Activated CD4-positive, alpha-beta T cell treated with anti-CD3 and anti-CD28 coated beads for 36 hours (primary cell): ENCODE measurements at regions of chr2 and their contacts with region 1.

Region 1: DNA sequence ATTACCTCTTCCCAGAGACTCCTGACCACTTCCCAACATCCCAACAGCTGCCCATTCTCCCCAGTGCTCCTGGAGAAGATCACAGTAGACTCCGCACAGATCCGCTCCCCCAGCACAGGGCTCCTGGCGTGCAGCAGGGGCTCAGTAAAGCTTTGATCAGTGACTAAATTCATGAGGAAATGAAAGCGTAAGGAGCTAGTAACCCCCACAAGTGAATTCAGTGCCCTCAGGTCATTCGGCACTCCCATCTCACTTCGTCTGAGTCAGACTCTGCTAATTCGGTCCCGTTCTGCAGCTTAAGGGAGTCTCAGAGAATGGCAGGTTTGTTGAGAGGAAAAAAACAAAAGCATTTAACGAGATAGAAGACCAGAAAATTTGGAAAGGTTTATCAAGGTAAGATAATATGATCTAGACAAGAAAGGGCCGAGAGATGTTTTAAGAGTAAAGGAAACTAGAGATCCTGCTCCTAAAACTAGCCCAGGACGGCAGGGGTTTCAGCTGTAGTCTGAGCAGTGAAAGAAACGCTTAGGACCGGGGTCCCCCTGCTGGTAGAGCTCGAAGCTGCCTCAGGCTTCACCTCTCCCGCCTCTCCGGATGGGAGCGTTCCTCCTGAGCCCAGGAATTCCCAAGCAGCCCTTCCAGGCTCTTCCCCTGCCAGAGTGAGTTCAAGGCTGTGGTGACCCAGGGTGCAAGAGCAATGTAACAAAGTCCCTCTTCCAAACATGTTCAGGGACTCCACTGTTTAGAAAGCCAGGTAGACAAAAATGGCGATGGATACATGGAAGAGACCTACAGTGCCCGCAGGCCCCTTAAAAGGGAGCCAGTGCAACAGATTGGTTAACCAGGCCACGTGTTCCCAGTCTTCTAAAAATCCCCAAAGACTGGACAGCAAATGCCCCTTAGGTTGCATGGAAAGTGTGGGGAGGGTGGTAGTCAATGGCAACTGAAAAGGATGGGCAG is 127.3 kb downstream of the DNER start:
- DNase-seq: peak; percentile 65
- ATAC-seq: peak; percentile 39
- H3K4me3 Mint-ChIP-seq: no peak overlapping the region
- H3K27ac Mint-ChIP-seq: no peak overlapping the region
- H3K4me1 Mint-ChIP-seq: no peaks in the 10 kb centered on the region
- H3K27me3 Mint-ChIP-seq: peaks cover 18% of the 10 kb centered on the region

Region 2: DNA sequence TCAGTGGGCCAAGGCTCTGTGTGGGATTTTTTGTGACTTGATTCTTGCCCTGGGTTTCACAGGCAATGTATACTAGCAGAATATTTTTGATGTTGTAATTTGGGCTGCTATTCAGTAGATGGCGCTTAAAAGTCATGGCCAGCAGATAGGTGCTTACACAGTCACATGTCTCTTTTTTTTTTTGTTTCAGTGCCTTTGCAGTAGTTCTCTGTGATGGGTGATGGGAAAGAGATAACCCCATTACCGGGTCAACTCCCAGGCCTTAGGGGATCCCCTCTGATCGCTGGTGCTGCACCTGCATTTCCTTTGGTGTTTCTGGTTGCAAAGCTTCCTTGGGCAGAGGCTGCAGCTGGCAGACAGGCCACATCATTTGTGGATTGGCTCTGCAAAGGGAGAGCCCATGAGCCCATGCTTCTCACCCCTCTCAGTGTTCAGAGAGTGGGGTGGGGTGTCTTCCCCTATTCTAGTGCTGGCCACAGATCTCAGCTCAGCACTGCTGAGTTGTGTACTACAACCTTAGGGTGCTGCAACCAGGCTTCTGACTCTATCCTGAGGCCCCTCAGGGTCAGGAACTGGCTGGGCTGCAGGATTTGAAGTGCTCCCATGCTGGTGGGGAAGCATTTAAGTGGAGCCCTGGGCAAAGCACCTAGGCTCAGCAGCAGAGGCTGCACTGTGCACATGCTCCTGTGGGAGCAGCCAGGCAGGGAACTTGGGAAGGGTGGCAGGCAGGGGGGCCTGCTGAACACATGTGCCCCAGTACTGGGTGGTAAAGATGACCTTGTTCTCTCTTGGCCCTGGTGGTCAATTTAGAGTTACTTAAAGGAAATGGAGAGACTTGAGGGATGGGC is 1185.7 kb before region 1 on chr2:
- CTCF ChIA-PET with region 1: no interaction called
- POLR2A ChIA-PET with region 1: no interaction called
- intact Hi-C with region 1: loop called in 1 of 2 experiments (anchors 5 kb)
- DNase-seq: no peak
- ATAC-seq: no peak
- H3K4me3 Mint-ChIP-seq: no peak overlapping the region
- H3K27ac Mint-ChIP-seq: no peak overlapping the region
- H3K4me1 Mint-ChIP-seq: no peaks in the 10 kb centered on the region
- H3K27me3 Mint-ChIP-seq: no peaks in the 10 kb centered on the region

Region 3: DNA sequence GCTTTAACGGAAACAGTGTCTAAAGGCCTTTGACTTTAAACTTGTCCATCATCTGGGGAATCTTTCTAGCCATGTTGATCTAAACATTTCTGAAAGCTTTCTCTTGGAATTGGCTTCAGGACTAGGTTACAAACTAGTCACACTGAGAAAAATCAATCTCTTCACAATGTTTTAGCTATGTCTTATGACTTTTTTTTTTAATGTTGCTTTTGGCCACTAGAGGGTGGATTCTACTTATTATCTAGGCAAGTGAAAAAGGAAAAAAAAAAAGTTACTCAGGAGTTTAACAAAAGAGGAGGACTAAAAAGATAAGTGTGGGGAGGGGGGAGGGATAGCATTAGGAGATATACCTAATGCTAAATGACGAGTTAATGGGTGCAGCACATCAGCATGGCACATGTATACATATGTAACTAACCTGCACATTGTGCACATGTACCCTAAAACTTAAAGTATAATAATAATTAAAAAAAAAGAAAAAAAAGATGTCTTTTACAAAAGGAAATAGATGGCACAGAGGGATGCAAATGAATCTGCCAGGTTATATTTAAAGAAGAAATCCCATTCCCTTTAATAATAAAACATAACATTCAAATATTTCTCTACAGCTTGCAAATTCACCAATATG is 155.6 kb before region 1 on chr2:
- CTCF ChIA-PET with region 1: interaction called, 4 read pairs
- POLR2A ChIA-PET with region 1: no interaction called
- intact Hi-C with region 1: loop called (anchors 5 to 10 kb)
- DNase-seq: no peak
- ATAC-seq: no peak
- H3K4me3 Mint-ChIP-seq: no peak overlapping the region
- H3K27ac Mint-ChIP-seq: no peak overlapping the region
- H3K4me1 Mint-ChIP-seq: no peaks in the 10 kb centered on the region
- H3K27me3 Mint-ChIP-seq: peaks cover 6% of the 10 kb centered on the region

Region 4: DNA sequence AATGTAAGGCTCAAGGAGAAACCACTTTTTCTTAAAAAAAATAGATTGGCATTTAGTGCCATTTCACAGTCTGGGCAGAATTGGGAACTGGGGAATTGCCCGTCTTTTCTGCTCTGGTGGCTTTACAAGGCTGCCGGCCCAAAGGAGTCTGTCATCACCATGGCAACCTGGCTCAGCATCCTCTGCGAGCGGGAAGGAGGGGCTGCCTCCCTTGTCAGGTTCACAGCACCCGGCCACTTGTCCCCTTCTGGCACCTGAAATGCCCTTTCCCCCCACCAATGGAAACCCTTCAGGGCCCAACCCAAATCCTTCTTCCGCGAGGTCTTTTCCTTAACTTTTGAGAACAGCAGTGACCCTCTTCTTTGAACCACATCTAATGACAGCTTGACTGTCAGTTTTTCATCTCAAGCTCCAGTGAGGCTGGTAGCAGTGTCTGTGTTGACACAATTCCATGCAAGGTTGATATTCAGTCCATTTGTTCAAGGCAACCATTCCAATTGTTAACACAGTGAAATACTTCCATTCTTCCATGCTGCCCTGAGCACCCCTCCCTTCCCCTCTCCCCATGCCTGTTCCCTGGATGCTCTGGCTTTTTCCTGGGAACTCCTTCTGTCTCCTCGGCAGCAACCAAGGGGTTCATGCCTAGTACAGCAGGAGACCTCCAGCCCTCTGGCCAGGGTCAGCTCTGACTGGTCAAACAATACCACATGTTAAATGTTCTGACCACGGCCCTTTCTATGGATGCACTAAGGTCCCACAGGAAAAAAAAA is 47.8 kb after region 1 on chr2:
- CTCF ChIA-PET with region 1: no interaction called
- POLR2A ChIA-PET with region 1: no interaction called
- intact Hi-C with region 1: no loop called
- DNase-seq: no peak
- ATAC-seq: no peak
- H3K4me3 Mint-ChIP-seq: no peak overlapping the region
- H3K27ac Mint-ChIP-seq: no peak overlapping the region
- H3K4me1 Mint-ChIP-seq: no peaks in the 10 kb centered on the region
- H3K27me3 Mint-ChIP-seq: peaks cover 16% of the 10 kb centered on the region